AG04449 (cell line): ENCODE measurements at regions of chr1 and their contacts with region 1.

Region 1: GRCh38 chr1:17236779-17237560 is 11.9 kb upstream of the PADI3 start:
- DNase-seq: peak; percentile 19
- H3K4me3 ChIP-seq: no peak overlapping the region
- CTCF ChIP-seq: peak; percentile 81

Region 2: DNA sequence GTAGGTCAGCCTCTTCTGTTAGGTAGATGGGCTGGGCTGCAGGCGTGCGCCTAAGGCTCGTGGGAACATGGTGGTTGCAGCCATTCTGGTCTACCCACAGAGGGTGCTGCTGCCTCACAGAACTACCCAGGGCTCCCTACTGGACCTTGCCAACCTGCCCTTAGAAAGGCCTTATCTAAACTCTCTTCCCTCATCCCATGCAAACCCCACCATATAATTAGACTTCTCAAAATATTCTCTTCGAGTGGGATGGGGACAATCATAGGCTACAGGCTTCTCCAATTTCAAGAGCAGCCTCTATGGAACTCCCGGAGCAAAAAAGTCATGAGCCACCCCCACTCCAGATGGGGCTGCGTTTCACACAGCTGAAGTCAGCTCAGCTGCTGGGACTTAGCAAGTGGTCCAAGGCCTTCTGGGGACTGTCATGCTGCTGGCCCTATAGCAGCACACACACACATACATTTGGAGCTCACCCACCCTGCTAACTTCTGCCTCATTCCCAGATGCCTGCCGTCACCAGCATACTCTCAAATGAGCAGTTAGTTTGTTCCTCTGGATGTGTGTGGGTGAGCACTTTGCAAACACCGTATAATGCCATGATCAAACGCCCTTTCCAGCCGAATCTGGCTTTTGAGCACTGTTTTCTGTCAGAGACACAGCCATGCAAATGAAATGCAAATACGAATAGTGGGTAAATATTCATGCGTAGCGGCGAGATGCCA is 177.1 kb before region 1 on chr1:
- CTCF ChIA-PET with region 1: interaction called, 61 read pairs
- POLR2A ChIA-PET with region 1: no interaction called
- DNase-seq: no peak
- H3K4me3 ChIP-seq: no peak overlapping the region
- CTCF ChIP-seq: peak; percentile 93

Region 3: GRCh38 chr1:17080880-17081279 is 156.1 kb before region 1 on chr1:
- CTCF ChIA-PET with region 1: no interaction called
- POLR2A ChIA-PET with region 1: no interaction called
- DNase-seq: no peak
- H3K4me3 ChIP-seq: no peak overlapping the region
- CTCF ChIP-seq: no peak

Region 4: DNA sequence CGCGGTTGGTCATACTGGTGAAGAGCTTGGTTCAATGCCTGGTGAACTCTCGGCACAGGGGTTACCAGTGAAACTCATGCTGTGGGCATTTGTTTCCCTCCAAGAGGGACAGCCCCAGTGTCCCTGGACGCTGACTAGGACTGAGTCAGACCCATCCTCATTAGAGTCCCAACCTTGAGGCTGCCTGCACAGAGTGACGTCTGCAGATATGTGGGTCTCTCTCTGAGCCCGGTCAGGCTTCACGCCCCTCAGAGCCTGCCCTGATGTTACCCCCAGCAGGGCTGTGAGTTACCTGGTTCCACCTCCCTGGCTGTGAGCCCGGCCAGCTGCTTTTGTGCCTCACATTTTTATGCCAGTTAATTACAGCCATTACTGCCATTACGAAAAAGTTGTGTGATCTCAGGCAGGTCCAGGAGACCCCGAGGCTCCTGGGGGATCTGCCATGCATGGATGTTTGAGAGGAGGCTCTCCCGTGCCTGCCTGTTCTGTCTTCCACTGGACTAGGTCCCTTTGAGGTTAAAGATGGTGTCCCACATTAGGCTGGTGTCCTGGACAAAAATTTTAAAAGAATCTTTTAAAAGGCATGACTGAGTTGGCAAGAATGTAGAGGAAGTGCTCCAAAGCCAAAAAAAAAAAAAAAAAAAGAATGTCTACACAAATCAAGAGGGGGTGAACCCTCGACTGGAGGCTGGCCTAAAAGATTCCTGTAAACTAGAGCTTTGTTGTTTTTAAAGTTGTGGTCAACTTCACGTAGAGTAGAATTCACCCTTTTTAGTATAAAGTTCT is 68.7 kb before region 1 on chr1:
- CTCF ChIA-PET with region 1: interaction called, 8 read pairs
- POLR2A ChIA-PET with region 1: interaction called, 16 read pairs
- DNase-seq: peak; percentile 89
- H3K4me3 ChIP-seq: no peak overlapping the region
- CTCF ChIP-seq: no peak

Region 5: DNA sequence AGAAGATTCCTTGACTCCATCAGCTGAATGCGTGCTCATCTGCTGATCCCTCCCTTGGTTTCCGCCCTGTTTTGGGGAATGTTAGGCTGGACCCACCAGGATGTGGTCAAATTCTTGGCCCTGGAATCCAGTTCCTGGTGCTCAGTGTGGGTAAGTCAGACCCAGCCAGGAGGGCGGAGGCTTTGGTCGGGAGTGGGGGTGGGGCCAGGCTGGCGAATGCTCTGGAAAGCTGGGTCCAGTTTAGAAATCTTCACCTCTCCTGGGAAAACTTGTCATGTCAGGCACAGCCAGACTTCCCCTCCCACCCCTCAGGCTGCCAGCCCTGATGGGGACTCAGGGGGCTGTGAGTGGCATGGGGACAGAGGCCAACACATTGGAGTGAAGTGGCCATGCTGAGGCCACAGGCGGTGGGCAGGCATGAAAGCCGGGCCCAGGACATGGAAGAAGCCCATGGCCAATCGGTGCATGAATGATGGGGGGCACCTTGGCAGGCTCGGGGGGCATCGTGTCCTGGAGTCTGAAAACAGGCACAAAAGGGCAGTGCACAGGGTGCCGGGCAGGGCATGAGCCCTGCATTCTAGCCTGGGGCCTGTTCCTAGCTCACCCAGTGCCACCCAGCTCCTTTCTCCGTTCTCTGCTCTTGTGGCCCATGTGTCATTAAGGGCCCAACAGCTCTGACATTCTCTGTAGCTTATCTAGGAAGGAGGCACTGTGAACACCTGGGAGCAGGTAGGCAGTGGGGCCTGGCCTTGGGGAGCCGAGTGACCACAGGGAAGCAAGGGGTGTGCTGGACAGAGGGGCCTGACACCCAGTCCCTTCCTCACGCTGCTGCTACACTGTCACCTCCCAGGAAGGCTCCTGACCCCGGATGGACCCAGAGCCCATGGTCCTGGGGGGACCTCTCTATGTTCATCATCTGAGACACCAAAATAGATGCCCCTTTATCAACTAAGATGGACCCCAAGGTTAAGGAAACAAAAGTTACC is 46.7 kb before region 1 on chr1:
- CTCF ChIA-PET with region 1: interaction called, 5 read pairs
- POLR2A ChIA-PET with region 1: interaction called, 36 read pairs
- DNase-seq: peak; percentile 97
- H3K4me3 ChIP-seq: no peak overlapping the region
- CTCF ChIP-seq: no peak

Region 6: DNA sequence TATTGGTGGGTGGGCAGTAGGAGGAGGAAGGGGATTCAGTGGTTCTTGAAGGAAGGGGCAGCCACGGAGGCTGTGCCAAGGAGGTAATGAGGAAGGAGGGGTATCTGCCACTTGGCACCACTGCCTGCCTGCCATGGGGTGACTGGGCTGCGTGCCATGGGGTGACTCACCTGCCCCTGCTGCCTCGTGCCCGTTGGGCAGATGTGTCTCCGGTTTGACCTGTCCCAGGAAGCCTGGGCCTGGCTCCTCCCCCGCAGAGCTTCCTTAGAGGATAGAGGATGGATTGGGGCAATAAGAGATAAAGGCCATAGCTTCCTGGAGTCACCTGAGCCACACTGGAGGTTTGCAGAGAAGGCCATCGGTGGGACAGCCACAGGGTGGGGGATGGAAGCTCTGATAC is 13.6 kb after region 1 on chr1:
- CTCF ChIA-PET with region 1: interaction called, 104 read pairs
- POLR2A ChIA-PET with region 1: no interaction called
- DNase-seq: no peak
- H3K4me3 ChIP-seq: no peak overlapping the region
- CTCF ChIP-seq: no peak

Region 7: GRCh38 chr1:17274186-17275170 is 37.5 kb after region 1 on chr1:
- CTCF ChIA-PET with region 1: interaction called, 10 read pairs
- POLR2A ChIA-PET with region 1: no interaction called
- DNase-seq: no peak
- H3K4me3 ChIP-seq: no peak overlapping the region
- CTCF ChIP-seq: peak; percentile 81

Region 8: GRCh38 chr1:17405898-17406759 is 169.2 kb after region 1 on chr1:
- CTCF ChIA-PET with region 1: interaction called, 13 read pairs
- POLR2A ChIA-PET with region 1: no interaction called
- DNase-seq: no peak
- H3K4me3 ChIP-seq: no peak overlapping the region
- CTCF ChIP-seq: peak; percentile 88